BJ (cell line): ENCODE measurements at regions of chr12 and their contacts with region 1.

Region 1: GRCh38 chr12:12032851-12033588 is 37.7 kb upstream of the BCL2L14 start:
- DNase-seq: peak; percentile 27
- H3K4me3 ChIP-seq: peak overlapping the region; percentile 25
- H3K27me3 ChIP-seq: no peaks in the 10 kb centered on the region; the same call in 1 of the 2 replicates
- CTCF ChIP-seq: peak; percentile 85

Region 2: GRCh38 chr12:11545484-11546330 is 487.3 kb before region 1 on chr12:
- CTCF ChIA-PET with region 1: interaction called, 13 read pairs
- POLR2A ChIA-PET with region 1: no interaction called
- DNase-seq: no peak
- H3K4me3 ChIP-seq: no peak overlapping the region
- H3K27me3 ChIP-seq: no peaks in the 10 kb centered on the region; the same call in 1 of the 2 replicates
- CTCF ChIP-seq: no peak

Region 3: DNA sequence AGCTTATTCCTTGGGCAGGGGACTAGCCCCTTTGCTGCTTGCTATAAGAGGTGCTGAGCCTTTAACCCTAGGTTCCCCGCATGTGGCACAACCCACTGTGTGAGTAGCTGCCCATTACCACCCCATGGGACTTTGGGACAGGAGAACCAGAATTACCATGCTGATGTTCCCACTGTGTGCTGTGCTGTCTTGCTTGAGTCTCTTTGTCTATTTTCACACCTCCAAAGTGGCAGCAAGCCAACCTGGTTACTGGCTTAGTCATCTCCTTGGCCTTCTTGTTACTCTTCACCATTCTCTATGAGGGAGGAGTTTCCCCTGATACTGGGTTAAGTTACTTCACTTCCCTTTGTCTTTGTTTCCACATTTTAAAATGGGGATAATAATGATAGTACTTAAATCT is 456.9 kb before region 1 on chr12:
- CTCF ChIA-PET with region 1: interaction called, 156 read pairs
- POLR2A ChIA-PET with region 1: no interaction called
- DNase-seq: no peak
- H3K4me3 ChIP-seq: no peak overlapping the region
- H3K27me3 ChIP-seq: no peaks in the 10 kb centered on the region
- CTCF ChIP-seq: no peak

Region 4: DNA sequence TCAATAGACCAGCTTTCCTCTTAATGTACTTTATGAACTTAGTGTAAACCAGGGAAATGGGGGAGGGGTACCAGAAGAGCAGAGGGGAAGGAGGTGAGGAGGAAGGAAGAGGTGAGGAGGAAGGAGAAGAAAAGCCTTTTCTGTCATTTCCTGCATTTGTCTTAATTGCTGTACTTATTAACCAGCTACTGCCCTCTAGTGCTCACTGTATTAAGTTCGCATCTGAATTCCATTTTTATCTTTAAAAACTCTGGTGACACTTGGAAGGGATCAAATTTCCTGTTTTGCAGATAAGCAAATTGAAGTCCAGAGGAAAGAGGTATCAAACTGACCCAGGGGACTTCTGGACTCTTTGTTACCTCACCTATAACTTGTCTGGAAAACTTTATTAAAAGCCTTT is 294.8 kb after region 1 on chr12:
- CTCF ChIA-PET with region 1: interaction called, 71 read pairs
- POLR2A ChIA-PET with region 1: no interaction called
- DNase-seq: no peak
- H3K4me3 ChIP-seq: no peak overlapping the region
- H3K27me3 ChIP-seq: no peaks in the 10 kb centered on the region
- CTCF ChIP-seq: peak; percentile 68

Region 5: DNA sequence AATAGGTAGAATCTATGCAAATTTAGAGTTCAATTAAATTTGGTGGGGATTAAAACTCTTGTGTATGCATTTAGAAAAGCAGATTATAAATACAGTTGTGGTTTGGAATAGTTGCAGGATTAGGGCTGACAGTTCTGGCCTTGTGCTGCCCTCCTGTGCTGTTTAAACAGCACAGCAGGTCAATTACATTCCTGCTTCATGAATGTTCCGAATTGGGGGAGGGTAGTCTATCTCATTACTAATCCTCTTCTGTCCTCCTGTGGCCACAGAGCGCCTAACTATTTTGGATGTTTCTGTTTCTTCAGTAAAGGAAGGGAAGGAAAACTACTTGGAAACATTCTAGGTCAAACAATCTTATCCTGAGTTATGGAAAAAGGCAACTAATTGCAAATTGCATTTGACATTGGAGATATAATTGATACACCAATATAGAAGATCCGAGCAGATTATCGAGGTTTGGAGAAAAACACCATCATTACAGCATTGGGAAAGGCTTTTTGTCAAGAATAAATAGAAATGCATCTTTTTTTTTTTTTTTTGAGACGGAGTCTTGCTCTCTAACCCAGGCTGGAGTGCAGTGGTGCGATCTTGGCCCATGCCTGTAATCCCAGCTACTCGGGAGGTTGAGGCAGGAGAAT is 671.7 kb after region 1 on chr12:
- CTCF ChIA-PET with region 1: interaction called, 20 read pairs
- POLR2A ChIA-PET with region 1: no interaction called
- DNase-seq: peak; percentile 39
- H3K4me3 ChIP-seq: no peak overlapping the region
- H3K27me3 ChIP-seq: no peaks in the 10 kb centered on the region
- CTCF ChIP-seq: peak; percentile 95